Left lung (tissue), 14 donors: ENCODE measurements at regions of chr1 and their contacts with region 1.

Region 1: DNA sequence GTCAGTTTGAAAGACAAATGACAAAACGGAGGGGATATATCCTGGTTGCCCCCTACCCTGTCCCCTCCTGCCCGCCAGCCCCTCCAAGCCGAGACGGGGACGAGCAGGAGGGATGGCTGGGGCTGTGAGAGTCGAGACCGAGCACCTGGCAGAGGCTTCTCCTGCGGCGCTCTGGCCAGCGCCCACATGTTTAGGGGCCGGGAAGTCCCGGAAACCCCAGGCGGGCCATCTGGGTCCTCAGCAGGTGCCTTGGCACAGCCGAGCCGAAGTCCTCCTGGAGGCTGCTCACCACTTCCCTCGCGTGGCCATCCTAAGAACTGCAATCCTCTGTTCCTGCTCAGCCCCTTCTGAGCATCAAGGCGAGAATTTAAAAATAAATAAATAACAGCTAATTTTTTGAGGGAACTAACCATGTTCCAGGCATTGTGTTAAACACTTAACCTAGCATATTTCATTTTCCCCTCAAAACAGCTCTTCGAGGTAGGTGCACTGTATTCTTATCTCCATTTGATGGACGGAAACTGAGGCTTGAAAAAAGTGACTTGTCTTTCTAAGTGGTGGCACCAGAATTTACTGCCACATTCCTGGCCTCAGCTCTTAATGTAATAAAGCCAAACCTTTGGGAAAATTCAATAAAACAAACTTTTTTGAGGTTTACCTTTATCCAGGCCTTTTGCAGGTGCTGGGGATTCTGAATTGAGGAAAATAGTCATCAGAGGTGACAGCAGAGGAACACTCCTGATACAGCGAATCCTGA is 3.5 kb upstream of the RIMS3 start:
- DNase-seq: peak; percentile 35 to 91 (median 77)
- ATAC-seq: peak; percentile 88
- H3K4me3 ChIP-seq: peak overlapping the region in 1 of 2 donors; percentile 17
- H3K27ac ChIP-seq: no peak overlapping the region
- H3K4me1 ChIP-seq: peaks cover 0 to 15% of the 10 kb centered on the region in 2 donors
- H3K27me3 ChIP-seq: no peaks in the 10 kb centered on the region
- CTCF ChIP-seq: peak; percentile 92 to 97

Region 2: DNA sequence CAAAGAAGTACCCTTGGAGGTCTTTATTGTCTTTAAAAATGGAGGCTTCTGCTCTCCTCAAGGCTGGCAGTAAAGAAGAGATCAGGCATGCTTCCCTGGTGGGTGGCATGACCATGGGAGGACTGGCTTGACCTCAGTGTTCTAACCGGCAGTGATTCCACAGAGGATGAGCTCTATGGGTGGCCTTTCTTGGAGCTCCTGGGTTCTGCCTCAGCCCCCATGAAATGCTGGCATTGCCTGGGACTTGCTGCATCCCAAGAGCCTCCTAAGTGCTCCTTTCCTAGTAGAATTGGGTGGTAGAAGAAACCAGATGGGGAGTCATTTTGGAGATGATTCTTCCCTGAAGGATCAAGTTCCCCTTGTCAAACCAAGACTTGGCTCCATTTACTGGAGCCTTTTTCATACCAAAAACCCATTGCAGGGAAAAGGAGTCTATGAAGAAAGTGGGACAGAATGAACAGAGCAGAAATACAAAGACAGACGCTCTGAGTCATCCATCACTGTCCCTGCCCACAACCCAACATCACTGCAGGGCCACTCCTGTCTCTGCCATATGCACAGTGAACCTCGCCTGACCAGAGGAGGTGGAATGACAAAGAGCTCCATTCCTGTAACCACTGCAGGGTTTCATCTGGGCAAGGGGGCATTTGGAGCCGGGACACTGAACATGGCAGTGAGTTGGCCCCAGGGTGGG is 45.9 kb before region 1 on chr1:
- intact Hi-C with region 1: loop called in 1 of 2 experiments (anchors 5 kb)
- DNase-seq: no peak
- ATAC-seq: no peak
- H3K4me3 ChIP-seq: no peak overlapping the region
- H3K27ac ChIP-seq: no peak overlapping the region
- H3K4me1 ChIP-seq: no peaks in the 10 kb centered on the region
- H3K27me3 ChIP-seq: no peaks in the 10 kb centered on the region
- CTCF ChIP-seq: no peak